HEK293T (cell line): ENCODE measurements at regions of chr1 and their contacts with region 1.

Region 1: GRCh38 chr1:234373064-234373958 is at the start of gene COA6:
- DNase-seq: peak; percentile 92

Region 2: GRCh38 chr1:234326497-234327366 is 46.6 kb before region 1 on chr1:
- CTCF ChIA-PET with region 1: interaction called, 5 read pairs
- POLR2A ChIA-PET with region 1: interaction called, 11 read pairs
- DNase-seq: peak; percentile 84

Region 3: GRCh38 chr1:234355782-234356510 is 17.4 kb before region 1 on chr1:
- CTCF ChIA-PET with region 1: no interaction called
- POLR2A ChIA-PET with region 1: interaction called, 16 read pairs
- DNase-seq: no peak

Region 4: DNA sequence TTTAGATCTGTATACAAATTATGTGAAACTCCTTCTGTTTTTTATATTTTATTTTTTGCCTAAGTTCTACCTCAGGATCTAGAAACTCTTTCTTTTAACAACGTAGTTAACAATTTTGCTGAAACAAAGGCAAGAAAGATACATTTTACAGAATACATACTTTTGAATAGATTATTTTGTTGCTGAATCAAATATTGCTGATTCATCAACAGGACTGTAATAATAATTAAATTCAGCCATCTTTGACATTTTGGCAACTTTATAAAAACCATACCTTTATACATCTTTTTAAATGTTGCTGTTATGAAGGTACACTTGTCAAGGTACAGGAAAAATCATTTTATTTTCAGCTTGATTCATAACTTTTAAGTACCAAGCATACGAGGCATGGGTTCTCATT is 10.8 kb before region 1 on chr1:
- CTCF ChIA-PET with region 1: no interaction called
- POLR2A ChIA-PET with region 1: interaction called, 16 read pairs
- DNase-seq: no peak

Region 5: GRCh38 chr1:234478481-234479309 is 105.4 kb after region 1 on chr1 and contains the start of gene TARBP1:
- CTCF ChIA-PET with region 1: no interaction called
- POLR2A ChIA-PET with region 1: interaction called, 11 read pairs
- DNase-seq: peak; percentile 94